Activated T-helper 1 cell treated with anti-CD3 and anti-CD28 coated beads, Interleukin-12 subunit alpha, Interleukin-12 subunit beta, Interleukin-2, Interleukin-4 antibody, amounts not matched to agents 30 ng/mL and 10 ng/mL and 1 ng/mL, durations not matched to agents 14 hours and 24 hours and 36 hours (primary cell): ENCODE measurements at regions of chr3 and their contacts with region 1.

Region 1: GRCh38 chr3:119322835-119323722 is 28.9 kb downstream of the ARHGAP31 start:
- DNase-seq: peak; percentile 92
- H3K4me3 Mint-ChIP-seq: peak overlapping the region; percentile 80
- H3K27ac Mint-ChIP-seq: peak overlapping the region; percentile 92
- H3K4me1 Mint-ChIP-seq: peaks cover 52% of the 10 kb centered on the region
- H3K27me3 Mint-ChIP-seq: peaks cover 27% of the 10 kb centered on the region

Region 2: GRCh38 chr3:119293871-119294695 is 29.0 kb before region 1 on chr3 and contains the start of gene ARHGAP31:
- intact Hi-C with region 1: loop called (anchors 1 kb)
- DNase-seq: peak; percentile 82
- H3K4me3 Mint-ChIP-seq: peak within 1 kb of the TSS; percentile 85
- H3K27ac Mint-ChIP-seq: peak within 1 kb of the TSS; percentile 78
- H3K4me1 Mint-ChIP-seq: peaks cover 55% of the 10 kb centered on the region
- H3K27me3 Mint-ChIP-seq: peaks cover 42% of the 10 kb centered on the region
- total RNA-seq, gene ARHGAP31: 7.5 and 8.0 TPM in 2 replicates

Region 3: GRCh38 chr3:119395923-119396358 is 72.9 kb after region 1 on chr3:
- intact Hi-C with region 1: loop called (anchors 1 kb)
- DNase-seq: peak; percentile 2
- H3K4me3 Mint-ChIP-seq: no peak overlapping the region
- H3K27ac Mint-ChIP-seq: peak overlapping the region; percentile 63
- H3K4me1 Mint-ChIP-seq: peaks cover 36% of the 10 kb centered on the region
- H3K27me3 Mint-ChIP-seq: peaks cover 9% of the 10 kb centered on the region

Region 4: GRCh38 chr3:119498186-119498987 is 175.3 kb after region 1 on chr3 and contains the start of gene TIMMDC1:
- intact Hi-C with region 1: loop called (anchors 1 kb)
- DNase-seq: peak; percentile 96
- H3K4me3 Mint-ChIP-seq: peak within 1 kb of the TSS; percentile 100
- H3K27ac Mint-ChIP-seq: peak within 1 kb of the TSS; percentile 99
- H3K4me1 Mint-ChIP-seq: peaks cover 33% of the 10 kb centered on the region
- H3K27me3 Mint-ChIP-seq: no peaks in the 10 kb centered on the region
- total RNA-seq, gene TIMMDC1: 124 and 126 TPM in 2 replicates

Region 5: GRCh38 chr3:119637679-119638525 is 314.8 kb after region 1 on chr3:
- intact Hi-C with region 1: loop called (anchors 1 kb)
- DNase-seq: no peak
- H3K4me3 Mint-ChIP-seq: peak overlapping the region; percentile 47
- H3K27ac Mint-ChIP-seq: peak overlapping the region; percentile 89
- H3K4me1 Mint-ChIP-seq: peaks cover 45% of the 10 kb centered on the region
- H3K27me3 Mint-ChIP-seq: peaks cover under 1% of the 10 kb centered on the region

Region 6: GRCh38 chr3:120742198-120742849 is 1419.2 kb after region 1 on chr3 and contains the starts of genes GTF2E1 and RABL3:
- intact Hi-C with region 1: loop called (anchors 5 kb)
- DNase-seq: peak; percentile 95
- H3K4me3 Mint-ChIP-seq: peak within 1 kb of the TSS; percentile 84
- H3K27ac Mint-ChIP-seq: peak within 1 kb of the TSS; percentile 89
- H3K4me1 Mint-ChIP-seq: peaks cover 22% of the 10 kb centered on the region
- H3K27me3 Mint-ChIP-seq: no peaks in the 10 kb centered on the region
- total RNA-seq, gene GTF2E1: 25.3 and 29.2 TPM in 2 replicates
- total RNA-seq, gene RABL3: 24.3 and 25.6 TPM in 2 replicates